Gastrocnemius medialis (tissue), 4 donors: ENCODE measurements at regions of chr2 and their contacts with region 1.

Region 1: DNA sequence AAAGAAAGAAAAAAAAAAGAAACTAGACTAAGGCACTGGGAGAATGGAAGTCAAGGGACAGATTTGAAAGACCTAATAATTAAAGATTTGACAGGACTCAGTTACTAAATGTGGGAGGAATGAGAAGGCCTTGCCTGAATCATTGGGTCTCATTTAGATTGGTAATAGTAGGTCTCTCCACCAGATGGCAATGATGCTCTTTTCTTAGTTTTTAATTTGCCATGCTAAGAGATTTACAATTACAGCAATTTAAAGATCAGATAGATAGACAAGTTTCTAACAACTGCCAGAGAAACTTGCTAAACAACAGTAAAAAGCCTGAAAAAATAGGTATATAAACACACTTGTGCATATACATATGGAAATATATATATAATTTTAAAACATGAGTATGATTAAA is 153.0 kb downstream of the TMEM247 start:
- DNase-seq: no peak
- ATAC-seq: peak in 1 of 2 donors; percentile 56
- H3K4me3 ChIP-seq: no peak overlapping the region
- H3K27ac ChIP-seq: no peak overlapping the region
- H3K4me1 ChIP-seq: no peaks in the 10 kb centered on the region
- H3K27me3 ChIP-seq: no peaks in the 10 kb centered on the region
- CTCF ChIP-seq: peak in 4 of 5 experiments; percentile 32 to 53 (median 44)
- POLR2A ChIP-seq: no peak

Region 2: DNA sequence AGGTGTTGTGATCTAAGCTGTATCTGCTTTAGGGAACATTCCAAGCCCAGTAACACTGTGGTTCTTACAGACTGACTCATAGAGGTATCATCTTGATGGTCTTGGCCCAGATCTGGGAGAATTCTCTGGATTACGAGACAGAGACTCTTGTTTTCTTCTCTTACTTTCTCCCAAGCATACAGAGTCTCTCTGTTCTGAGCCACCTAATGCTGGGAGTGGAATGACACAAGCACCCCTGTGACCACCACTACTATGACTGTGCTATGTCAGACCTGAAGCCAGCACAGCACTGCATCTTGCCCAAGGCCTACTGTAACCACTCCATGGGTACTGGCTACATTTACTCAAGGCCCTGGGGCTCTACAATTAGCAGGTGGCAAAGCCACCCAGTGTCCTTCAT is 416.1 kb before region 1 on chr2:
- in situ Hi-C with region 1: no loop called
- intact Hi-C with region 1: no loop called
- DNase-seq: no peak
- ATAC-seq: no peak
- H3K4me3 ChIP-seq: no peak overlapping the region
- H3K27ac ChIP-seq: no peak overlapping the region
- H3K4me1 ChIP-seq: no peaks in the 10 kb centered on the region
- H3K27me3 ChIP-seq: no peaks in the 10 kb centered on the region
- CTCF ChIP-seq: no peak
- POLR2A ChIP-seq: no peak

Region 3: GRCh38 chr2:46650556-46651001 is 18.2 kb after region 1 on chr2:
- in situ Hi-C with region 1: no loop called
- intact Hi-C with region 1: no loop called
- DNase-seq: peak; percentile 30 to 62
- ATAC-seq: peak; percentile 75 to 86
- H3K4me3 ChIP-seq: no peak overlapping the region
- H3K27ac ChIP-seq: no peak overlapping the region
- H3K4me1 ChIP-seq: peaks cover 0 to 4% of the 10 kb centered on the region in 2 donors
- H3K27me3 ChIP-seq: no peaks in the 10 kb centered on the region
- CTCF ChIP-seq: peak; percentile 82 to 98 (median 92)
- POLR2A ChIP-seq: no peak

Region 4: DNA sequence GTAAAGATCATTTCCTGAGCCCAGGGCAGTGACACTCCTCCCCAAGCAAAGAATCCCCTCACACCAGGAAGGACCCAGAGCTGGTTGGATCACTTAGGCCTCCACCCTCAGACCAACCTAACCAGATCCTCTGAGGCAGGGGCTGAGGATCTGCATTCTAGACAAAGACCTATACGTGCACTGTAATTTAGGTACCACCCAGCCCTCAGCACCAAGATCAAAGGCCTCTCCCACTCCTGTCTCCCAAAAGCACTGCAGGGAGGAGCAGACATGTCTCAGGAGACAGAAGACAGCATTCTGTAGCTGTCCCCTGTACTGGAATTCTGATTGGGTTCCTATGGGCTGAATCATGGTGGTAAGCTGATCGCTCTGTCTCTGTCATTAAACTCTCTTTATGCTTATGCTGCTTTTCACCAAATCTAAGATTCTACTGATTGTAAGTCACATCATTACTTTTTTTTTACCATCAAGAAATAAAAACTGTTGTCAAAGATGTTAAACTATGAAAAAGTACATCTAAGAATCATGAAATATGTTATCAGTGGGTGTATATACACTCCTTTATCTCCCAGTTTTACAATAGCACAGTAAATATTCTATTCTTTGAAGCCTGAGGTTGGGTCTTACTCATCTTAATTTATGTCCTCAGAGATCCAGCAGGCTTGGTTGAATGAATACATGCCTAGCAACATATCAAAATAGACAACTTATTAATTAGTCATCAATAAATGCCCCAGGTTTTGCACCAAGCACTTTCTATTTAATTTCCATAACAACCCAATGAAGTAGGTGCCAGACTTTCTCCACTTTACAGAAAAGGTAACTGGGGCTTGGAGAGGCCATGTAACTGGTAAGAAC is 254.9 kb after region 1 on chr2:
- in situ Hi-C with region 1: loop called in 2 of 4 experiments (anchors 5 to 10 kb)
- intact Hi-C with region 1: loop called (anchors 2 kb)
- DNase-seq: no peak
- ATAC-seq: no peak
- H3K4me3 ChIP-seq: no peak overlapping the region
- H3K27ac ChIP-seq: no peak overlapping the region
- H3K4me1 ChIP-seq: peaks cover 4 to 13% of the 10 kb centered on the region in 2 donors
- H3K27me3 ChIP-seq: no peaks in the 10 kb centered on the region
- CTCF ChIP-seq: no peak
- POLR2A ChIP-seq: no peak

Region 5: DNA sequence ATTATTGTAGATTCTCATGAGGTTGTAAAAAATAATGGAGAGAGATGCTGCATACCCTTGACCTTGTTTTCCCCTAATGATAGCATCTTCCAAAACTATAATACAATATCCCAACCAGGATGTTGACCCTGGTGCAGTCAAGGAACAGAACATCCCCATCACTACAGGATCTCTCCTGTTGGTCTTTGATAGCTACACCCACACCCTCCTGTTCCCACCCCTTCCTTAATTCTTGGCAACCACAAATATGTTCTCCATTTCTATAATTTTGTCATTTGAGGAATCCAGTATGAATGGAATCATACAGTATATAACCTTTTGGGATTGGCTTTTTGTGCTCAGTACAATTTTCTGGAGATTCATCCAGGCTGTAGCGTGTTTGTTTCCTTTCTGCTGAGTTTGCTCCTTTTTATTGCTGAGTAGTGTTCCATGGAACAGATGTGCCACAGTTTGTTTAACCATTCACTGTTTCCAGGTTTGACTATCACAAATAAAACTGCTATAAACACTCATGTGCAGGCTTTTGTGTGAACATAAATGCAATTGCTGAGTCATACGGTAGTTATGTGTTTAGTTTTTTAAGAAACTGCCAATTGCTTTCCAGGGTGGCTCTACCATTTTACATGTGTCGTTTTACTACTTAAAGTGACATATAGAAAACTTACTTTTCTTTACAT is 261.1 kb after region 1 on chr2:
- in situ Hi-C with region 1: loop called in 2 of 4 experiments (anchors 5 to 10 kb)
- intact Hi-C with region 1: loop called (anchors 2 kb)
- DNase-seq: no peak
- ATAC-seq: peak in 1 of 2 donors; percentile 49
- H3K4me3 ChIP-seq: no peak overlapping the region
- H3K27ac ChIP-seq: no peak overlapping the region
- H3K4me1 ChIP-seq: peaks cover 4% of the 10 kb centered on the region in 2 donors
- H3K27me3 ChIP-seq: no peaks in the 10 kb centered on the region
- CTCF ChIP-seq: no peak
- POLR2A ChIP-seq: no peak